Cardiac septum (tissue), 1 donor: ENCODE measurements at regions of chr12 and their contacts with region 1.

Region 1: GRCh38 chr12:12611512-12612306 is at the start of gene CREBL2:
- DNase-seq: peak; percentile 95
- total RNA-seq, gene CREBL2: 20.0 TPM

Region 2: GRCh38 chr12:12696562-12697383 is 85.1 kb after region 1 on chr12:
- intact Hi-C with region 1: loop called (anchors 5 kb)
- DNase-seq: peak; percentile 96